Activated CD4-positive, alpha-beta T cell treated with anti-CD3 and anti-CD28 coated beads for 36 hours (primary cell): ENCODE measurements at regions of chr12 and their contacts with region 1.

Region 1: DNA sequence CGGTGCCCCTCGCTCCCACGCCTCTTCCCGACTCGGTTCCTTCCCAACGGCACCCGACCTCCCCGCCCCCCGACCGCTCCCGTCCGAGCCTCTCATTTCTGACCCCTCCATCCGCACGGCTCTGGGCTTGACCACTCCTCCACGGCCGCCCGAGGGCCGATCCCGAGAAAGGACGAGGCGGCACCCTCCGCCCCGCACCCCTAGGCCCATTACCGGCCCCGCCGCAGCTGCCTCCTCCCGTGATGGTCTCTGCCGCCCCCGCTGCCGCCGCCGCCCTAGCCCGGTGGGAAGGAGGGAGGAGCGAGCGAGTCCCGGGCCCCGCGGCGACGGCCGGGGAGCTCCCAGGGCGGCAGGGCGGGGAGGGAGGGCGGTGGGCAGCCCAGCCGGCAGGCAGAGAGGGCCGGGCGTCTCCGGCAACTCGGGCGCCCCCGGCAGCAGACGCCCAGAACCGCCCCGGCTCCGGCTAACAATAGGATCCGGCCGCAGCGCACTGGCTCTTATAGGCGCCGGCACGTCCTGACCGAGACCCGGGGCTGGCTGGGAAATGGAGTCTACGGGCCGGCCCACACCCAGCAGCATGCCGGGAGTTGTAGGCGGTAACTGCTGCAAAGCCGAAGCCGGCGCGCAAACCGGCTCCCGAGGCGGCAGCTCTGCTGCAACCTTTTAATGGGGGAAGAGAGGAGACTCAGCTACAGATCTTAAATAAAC is at the start of gene CSRNP2:
- DNase-seq: peak; percentile 97
- ATAC-seq: peak; percentile 99
- H3K4me3 Mint-ChIP-seq: peak within 1 kb of the TSS; percentile 95
- H3K27ac Mint-ChIP-seq: peak within 1 kb of the TSS; percentile 86
- H3K4me1 Mint-ChIP-seq: peaks cover 46% of the 10 kb centered on the region
- H3K27me3 Mint-ChIP-seq: no peaks in the 10 kb centered on the region
- total RNA-seq, gene CSRNP2: 12.8 to 13.6 TPM

Region 2: DNA sequence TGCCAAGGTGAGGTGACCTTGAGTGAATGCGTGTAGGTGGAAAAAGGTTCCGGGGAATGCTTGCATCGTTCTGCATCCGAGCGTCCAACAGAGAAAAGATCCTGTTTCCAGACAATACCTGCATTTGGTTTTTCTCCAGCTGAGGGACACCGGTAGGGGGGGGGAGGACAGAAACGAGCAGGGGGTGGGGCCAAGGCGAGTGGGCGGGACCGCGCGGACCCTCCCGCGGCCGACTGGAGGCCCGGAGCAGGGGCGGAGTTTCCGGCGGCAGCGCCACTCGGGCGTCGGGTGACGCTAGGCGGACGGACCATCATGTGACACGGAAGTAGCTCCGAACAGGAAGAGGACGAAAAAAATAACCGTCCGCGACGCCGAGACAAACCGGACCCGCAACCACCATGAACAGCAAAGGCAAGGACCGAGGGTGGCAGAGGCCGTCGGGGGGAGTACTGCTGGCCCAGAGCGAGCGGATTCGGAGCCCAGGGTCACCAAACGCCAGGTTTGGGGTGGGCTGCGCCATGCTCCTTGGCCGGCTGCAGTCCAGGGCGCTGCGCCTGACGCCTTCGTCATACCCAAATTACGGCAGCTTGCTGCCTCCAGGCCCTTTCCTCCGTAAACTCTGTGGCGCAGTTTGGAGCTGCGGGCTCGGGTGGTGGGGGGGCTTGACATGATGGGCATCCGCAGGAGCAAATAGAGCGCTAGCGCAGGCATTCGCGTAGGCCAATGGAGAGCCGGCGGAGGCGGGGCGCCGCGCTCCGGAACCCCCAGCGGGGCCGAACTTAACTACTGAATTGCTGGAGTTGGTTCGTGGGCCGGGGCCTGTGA is 155.4 kb after region 1 on chr12 and contains the start of gene DAZAP2:
- CTCF ChIA-PET with region 1: interaction called, 3 read pairs
- POLR2A ChIA-PET with region 1: interaction called, 4 read pairs
- intact Hi-C with region 1: loop called (anchors 1 kb)
- DNase-seq: peak; percentile 98
- ATAC-seq: peak; percentile 92
- H3K4me3 Mint-ChIP-seq: peak within 1 kb of the TSS; percentile 87
- H3K27ac Mint-ChIP-seq: peak within 1 kb of the TSS; percentile 100
- H3K4me1 Mint-ChIP-seq: peaks cover 36% of the 10 kb centered on the region
- H3K27me3 Mint-ChIP-seq: no peaks in the 10 kb centered on the region
- total RNA-seq, gene DAZAP2: 94.8 to 95.2 TPM